HCT116 (cell line): ENCODE measurements at regions of chr20 and their contacts with region 1.

Region 1: DNA sequence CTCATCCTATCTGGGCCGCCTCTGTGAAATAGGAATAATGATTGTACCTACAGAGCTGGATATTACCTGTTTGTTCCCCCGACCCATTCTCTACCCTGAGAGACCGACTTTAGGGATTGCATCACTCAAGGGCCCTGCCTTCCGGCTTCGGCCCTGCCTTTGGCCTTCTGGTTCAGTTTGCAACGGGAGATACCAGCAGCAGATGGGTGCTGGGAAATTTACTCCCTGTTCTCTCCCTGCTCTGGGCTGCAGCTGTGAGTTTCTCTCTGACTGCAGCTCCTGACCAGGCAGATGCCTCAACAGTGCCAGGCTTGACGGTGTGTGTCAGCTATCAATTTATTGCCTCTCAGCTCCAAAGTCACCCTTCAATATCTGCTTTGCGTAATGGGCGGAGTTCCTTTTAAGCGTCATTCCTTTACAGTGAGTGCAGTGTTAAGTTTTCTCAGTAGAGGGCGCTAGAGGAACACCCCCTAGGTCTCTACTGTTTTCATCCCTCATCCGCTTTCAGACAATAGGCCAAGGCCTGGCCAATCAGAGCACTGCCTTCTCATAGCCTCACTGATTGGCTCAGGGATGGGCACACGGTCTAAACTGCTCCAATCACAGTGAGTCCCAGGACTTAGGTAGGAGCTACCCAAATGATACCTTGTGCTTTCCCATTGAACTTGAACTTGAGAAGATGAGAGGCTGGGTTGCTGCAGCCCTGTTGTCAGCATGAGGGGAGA is 30.0 kb downstream of the KCNG1 start:
- DNase-seq: peak; percentile 93
- ATAC-seq: peak; percentile 100
- H3K4me3 ChIP-seq: no peak overlapping the region
- H3K27ac ChIP-seq: no peak overlapping the region
- H3K4me1 ChIP-seq: peaks cover 0 to 8% of the 10 kb centered on the region in 2 experiments; a peak in 1 of 4 replicates
- H3K27me3 ChIP-seq: peaks cover 7% of the 10 kb centered on the region; the same call in 1 of the 2 replicates
- CTCF ChIP-seq: peak; percentile 85 to 91 (median 86)
- POLR2A ChIP-seq: no peak
- RAD21 ChIP-seq: peak; percentile 94

Region 2: DNA sequence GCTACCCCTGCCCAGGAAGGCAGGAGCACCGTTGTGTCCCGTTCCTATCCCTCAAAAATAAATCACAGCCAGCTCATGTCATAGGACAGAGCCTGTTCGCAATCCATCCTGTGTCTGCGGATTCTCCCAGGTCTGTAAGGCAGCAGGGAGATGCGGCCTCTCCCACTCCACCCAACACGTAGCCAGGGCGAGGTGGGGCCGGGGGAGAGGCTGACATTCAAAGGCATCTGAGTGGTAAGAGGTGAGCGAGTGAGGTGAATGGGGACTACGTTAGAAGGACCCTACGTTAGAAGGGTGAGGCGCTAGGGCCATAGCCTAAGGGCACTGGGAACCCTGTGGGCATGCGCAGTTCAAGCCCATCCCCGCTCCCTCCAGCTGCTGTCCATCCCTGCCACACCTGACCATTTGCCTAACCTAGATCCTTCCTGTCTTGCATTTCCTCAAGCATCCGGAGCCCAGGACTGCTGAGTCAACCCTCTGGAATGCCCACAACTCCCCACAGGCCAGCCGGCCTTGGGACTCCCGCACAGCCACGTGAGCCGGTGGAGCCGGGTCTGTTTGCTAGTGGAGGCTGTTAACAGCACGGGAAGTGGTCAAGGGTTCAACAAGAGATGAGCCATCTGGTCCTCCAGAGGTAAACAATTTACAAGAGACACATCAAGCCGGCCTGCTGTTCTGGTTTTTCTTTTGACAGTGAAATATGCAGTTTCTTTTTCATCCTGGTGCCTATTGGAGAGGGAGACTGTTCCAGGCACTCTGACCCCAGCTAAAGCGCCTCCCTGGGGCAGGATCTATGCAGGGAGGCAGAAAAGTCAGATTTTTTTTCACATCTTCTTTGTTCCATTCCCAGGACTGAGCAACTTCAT is 347.4 kb before region 1 on chr20:
- CTCF ChIA-PET with region 1: no interaction called
- POLR2A ChIA-PET with region 1: no interaction called
- RAD21 ChIA-PET with region 1: no interaction called
- intact Hi-C with region 1: no loop called
- DNase-seq: peak; percentile 80
- ATAC-seq: peak; percentile 94
- H3K4me3 ChIP-seq: peak overlapping the region in 1 of 2 experiments; percentile 35; a peak in 2 of 4 replicates
- H3K27ac ChIP-seq: peak overlapping the region; percentile 55
- H3K4me1 ChIP-seq: peaks cover 22 to 27% of the 10 kb centered on the region in 2 experiments
- H3K27me3 ChIP-seq: no peaks in the 10 kb centered on the region
- CTCF ChIP-seq: no peak
- POLR2A ChIP-seq: no peak
- RAD21 ChIP-seq: no peak

Region 3: GRCh38 chr20:50801666-50802125 is 191.2 kb before region 1 on chr20:
- CTCF ChIA-PET with region 1: no interaction called
- POLR2A ChIA-PET with region 1: no interaction called
- RAD21 ChIA-PET with region 1: no interaction called
- intact Hi-C with region 1: no loop called
- DNase-seq: no peak
- ATAC-seq: no peak
- H3K4me3 ChIP-seq: no peak overlapping the region
- H3K27ac ChIP-seq: no peak overlapping the region
- H3K4me1 ChIP-seq: no peaks in the 10 kb centered on the region
- H3K27me3 ChIP-seq: no peaks in the 10 kb centered on the region
- CTCF ChIP-seq: no peak
- POLR2A ChIP-seq: no peak
- RAD21 ChIP-seq: no peak

Region 4: GRCh38 chr20:50980851-50981713 is 11.8 kb before region 1 on chr20:
- CTCF ChIA-PET with region 1: interaction called, 38 read pairs
- POLR2A ChIA-PET with region 1: no interaction called
- RAD21 ChIA-PET with region 1: no interaction called
- intact Hi-C with region 1: no loop called
- DNase-seq: peak; percentile 41
- ATAC-seq: peak; percentile 76
- H3K4me3 ChIP-seq: no peak overlapping the region
- H3K27ac ChIP-seq: no peak overlapping the region
- H3K4me1 ChIP-seq: peaks cover 0 to 14% of the 10 kb centered on the region in 2 experiments; a peak in 2 of 4 replicates
- H3K27me3 ChIP-seq: no peaks in the 10 kb centered on the region
- CTCF ChIP-seq: peak; percentile 48 to 96 (median 85); a peak in 5 of 6 replicates
- POLR2A ChIP-seq: no peak
- RAD21 ChIP-seq: peak; percentile 75

Region 5: DNA sequence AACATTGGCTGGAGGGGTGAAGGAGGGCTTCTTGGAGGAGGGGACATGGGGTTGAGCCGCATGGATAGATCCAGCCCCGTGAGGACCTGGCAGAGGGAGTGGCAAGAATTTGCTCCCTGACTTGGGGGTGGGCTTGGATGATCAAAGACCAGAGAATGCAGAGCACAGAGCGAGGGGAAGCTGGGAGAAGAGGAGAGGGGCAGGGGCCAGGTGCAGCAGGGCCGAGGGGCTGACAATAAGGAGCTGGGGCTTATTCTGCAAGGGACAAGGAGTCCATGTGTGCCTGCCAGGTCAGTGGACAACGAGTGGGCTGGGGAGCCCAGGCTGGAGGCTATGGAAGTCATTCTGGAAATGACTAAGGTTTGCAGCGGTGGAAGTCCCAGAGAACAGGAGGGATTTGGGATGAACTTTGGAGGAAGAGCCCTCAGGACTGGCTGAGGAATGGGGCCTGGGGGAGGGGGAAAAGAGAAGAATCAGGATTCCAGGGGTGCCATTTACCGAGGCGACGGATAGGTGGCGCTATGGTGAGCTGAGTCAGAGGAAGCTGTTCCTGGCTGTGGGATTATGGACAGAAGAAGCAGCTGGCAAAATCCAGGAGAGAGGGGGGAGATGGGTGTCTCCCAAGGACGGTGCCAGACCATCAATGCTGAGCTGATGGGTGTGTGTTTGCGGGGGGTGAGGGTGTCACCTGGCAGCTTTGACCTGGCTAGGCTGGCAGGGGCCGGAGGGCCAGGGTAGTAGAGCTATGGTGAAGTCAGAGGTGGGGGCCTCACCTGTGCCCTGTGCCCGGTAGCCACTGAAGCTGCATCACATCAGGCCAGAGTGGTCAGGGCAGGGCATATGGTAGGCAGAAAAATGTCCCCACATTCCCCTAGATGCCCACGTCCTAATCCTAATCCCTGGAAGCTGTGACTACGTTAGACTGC is 22.2 kb after region 1 on chr20:
- CTCF ChIA-PET with region 1: interaction called, 27 read pairs
- POLR2A ChIA-PET with region 1: no interaction called
- RAD21 ChIA-PET with region 1: interaction called in 1 of 2 experiments, 5 read pairs
- intact Hi-C with region 1: no loop called
- DNase-seq: no peak
- ATAC-seq: peak; percentile 93
- H3K4me3 ChIP-seq: no peak overlapping the region
- H3K27ac ChIP-seq: no peak overlapping the region
- H3K4me1 ChIP-seq: no peaks in the 10 kb centered on the region
- H3K27me3 ChIP-seq: no peaks in the 10 kb centered on the region
- CTCF ChIP-seq: peak; percentile 43 to 92 (median 83); a peak in 5 of 6 replicates
- POLR2A ChIP-seq: no peak
- RAD21 ChIP-seq: peak; percentile 71

Region 6: DNA sequence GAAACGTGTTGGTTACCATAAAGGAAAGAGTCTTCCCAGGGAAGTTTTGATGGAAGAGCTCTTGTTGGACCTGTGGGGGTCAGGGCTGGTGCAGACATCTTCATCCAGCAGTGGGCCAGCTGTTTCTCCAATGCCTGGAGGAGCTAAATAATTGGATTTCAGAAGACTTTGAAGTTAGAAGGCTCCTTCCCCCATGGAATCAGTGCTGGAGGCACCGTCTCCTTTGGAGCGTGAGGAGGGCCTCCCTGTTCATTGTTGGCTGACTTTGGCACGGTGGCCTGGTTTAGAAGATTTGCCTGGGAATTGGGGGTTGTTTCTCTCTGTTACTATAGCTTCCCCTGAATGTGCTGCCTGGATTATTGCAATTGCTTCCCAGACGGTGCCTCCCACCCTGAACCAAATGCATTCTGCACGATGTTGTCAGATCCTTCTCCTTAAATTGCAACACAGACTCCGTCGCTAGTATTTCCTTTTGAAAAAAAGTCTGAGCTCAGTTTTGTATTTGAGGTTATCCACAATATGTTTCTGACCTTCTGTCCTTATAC is 57.7 kb after region 1 on chr20:
- CTCF ChIA-PET with region 1: no interaction called
- POLR2A ChIA-PET with region 1: no interaction called
- RAD21 ChIA-PET with region 1: no interaction called
- intact Hi-C with region 1: no loop called
- DNase-seq: no peak
- ATAC-seq: no peak
- H3K4me3 ChIP-seq: no peak overlapping the region
- H3K27ac ChIP-seq: no peak overlapping the region
- H3K4me1 ChIP-seq: no peaks in the 10 kb centered on the region
- H3K27me3 ChIP-seq: peaks cover 29% of the 10 kb centered on the region
- CTCF ChIP-seq: no peak
- POLR2A ChIP-seq: no peak
- RAD21 ChIP-seq: no peak

Region 7: GRCh38 chr20:51300104-51300503 is 307.2 kb after region 1 on chr20:
- CTCF ChIA-PET with region 1: interaction called, 91 read pairs
- POLR2A ChIA-PET with region 1: no interaction called
- RAD21 ChIA-PET with region 1: no interaction called
- intact Hi-C with region 1: no loop called
- DNase-seq: no peak
- ATAC-seq: no peak
- H3K4me3 ChIP-seq: no peak overlapping the region
- H3K27ac ChIP-seq: no peak overlapping the region
- H3K4me1 ChIP-seq: no peaks in the 10 kb centered on the region
- H3K27me3 ChIP-seq: no peaks in the 10 kb centered on the region
- CTCF ChIP-seq: no peak
- POLR2A ChIP-seq: no peak
- RAD21 ChIP-seq: no peak

Region 8: GRCh38 chr20:51306503-51307358 is 313.8 kb after region 1 on chr20:
- CTCF ChIA-PET with region 1: interaction called, 106 read pairs
- POLR2A ChIA-PET with region 1: interaction called, 15 read pairs
- RAD21 ChIA-PET with region 1: interaction called, 10 to 15 read pairs
- intact Hi-C with region 1: loop called (anchors 1 kb)
- DNase-seq: peak; percentile 62
- ATAC-seq: peak; percentile 100
- H3K4me3 ChIP-seq: no peak overlapping the region
- H3K27ac ChIP-seq: no peak overlapping the region; the same call in 1 of the 2 replicates
- H3K4me1 ChIP-seq: peaks cover 0 to 7% of the 10 kb centered on the region in 2 experiments; a peak in 1 of 4 replicates
- H3K27me3 ChIP-seq: no peaks in the 10 kb centered on the region
- CTCF ChIP-seq: peak; percentile 85 to 95 (median 88)
- POLR2A ChIP-seq: no peak
- RAD21 ChIP-seq: peak; percentile 99

Region 9: DNA sequence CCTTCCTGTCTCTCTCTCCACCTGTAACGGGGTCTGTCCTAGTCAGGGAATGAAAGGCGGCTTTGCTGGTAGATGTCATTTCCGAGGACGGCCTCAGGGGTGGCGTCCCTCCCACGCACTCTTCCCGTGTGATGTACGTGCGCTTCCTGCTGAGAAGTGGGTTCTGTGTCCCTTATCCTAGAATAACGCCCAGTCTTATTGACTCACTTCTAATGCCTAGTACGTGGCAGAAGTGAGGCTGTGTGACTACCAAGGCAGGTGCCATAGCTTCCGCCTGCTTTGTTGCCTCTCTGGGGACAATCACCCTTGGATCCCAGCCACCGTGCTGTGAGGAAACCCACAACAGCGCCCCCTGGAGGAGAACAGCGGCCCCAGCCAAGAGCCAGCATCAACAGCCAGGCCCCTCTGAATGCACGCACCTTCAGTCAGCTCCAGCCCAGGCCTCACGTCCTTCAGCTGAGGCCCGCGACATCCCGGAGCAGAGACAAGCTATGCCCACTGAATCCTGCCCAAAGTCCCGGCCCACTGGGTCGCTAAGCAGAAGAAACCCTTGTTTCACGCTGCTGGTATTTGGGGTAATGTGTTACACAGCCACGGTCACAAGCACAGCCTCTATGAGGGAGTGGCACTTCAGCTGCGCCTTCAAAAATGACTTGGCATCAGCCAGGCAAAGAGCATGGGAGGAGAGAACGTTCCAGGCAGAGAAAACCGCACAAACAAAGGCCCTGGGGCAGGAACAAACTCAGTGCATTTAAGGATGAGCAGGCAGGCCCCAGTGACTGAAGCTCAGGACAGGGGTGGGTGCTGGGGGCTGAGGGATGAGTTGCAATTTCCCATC is 325.4 kb after region 1 on chr20:
- CTCF ChIA-PET with region 1: interaction called, 56 read pairs
- POLR2A ChIA-PET with region 1: interaction called, 4 read pairs
- RAD21 ChIA-PET with region 1: interaction called, 3 to 4 read pairs
- intact Hi-C with region 1: no loop called
- DNase-seq: peak; percentile 51
- ATAC-seq: peak; percentile 96
- H3K4me3 ChIP-seq: no peak overlapping the region
- H3K27ac ChIP-seq: no peak overlapping the region
- H3K4me1 ChIP-seq: peaks cover 0 to 7% of the 10 kb centered on the region in 2 experiments; a peak in 3 of 4 replicates
- H3K27me3 ChIP-seq: no peaks in the 10 kb centered on the region
- CTCF ChIP-seq: peak; percentile 72 to 94 (median 94); a peak in 5 of 6 replicates
- POLR2A ChIP-seq: no peak
- RAD21 ChIP-seq: peak; percentile 59

Region 10: DNA sequence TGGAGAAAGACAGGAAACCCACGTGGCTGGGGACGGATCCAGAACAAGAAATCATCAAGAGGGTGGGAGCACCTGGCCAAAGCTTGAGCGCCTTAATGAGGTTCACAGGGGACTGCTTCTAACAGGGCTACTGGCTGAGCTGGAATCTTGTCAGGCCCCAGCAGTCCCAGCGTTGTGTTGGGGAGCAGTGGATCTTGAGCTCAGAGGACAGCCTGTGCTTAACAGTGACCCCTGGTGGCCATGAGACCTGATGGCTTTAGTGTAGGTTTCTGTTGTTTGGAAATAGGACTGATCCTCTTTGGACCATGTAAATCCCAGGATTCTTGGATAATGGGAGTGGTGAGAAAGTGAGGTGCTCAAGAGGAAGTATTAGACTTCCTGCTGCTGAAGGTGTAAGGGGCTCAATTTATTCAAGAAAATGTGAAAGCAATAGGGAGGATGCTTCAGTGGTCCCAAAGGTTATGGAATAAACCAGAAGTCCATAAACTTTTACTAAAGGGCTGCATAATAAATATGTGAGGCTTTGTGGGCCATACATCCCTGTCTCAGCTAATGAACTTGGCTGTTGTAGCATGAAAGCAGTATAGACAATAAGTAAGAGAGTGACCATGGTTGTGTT is 333.4 kb after region 1 on chr20:
- CTCF ChIA-PET with region 1: interaction called, 56 read pairs
- POLR2A ChIA-PET with region 1: interaction called, 4 read pairs
- RAD21 ChIA-PET with region 1: interaction called, 4 to 10 read pairs
- intact Hi-C with region 1: no loop called
- DNase-seq: peak; percentile 54
- ATAC-seq: peak; percentile 93
- H3K4me3 ChIP-seq: no peak overlapping the region
- H3K27ac ChIP-seq: no peak overlapping the region
- H3K4me1 ChIP-seq: no peaks in the 10 kb centered on the region
- H3K27me3 ChIP-seq: no peaks in the 10 kb centered on the region
- CTCF ChIP-seq: peak; percentile 51 to 86 (median 73); a peak in 5 of 6 replicates
- POLR2A ChIP-seq: no peak
- RAD21 ChIP-seq: peak; percentile 56

Region 11: DNA sequence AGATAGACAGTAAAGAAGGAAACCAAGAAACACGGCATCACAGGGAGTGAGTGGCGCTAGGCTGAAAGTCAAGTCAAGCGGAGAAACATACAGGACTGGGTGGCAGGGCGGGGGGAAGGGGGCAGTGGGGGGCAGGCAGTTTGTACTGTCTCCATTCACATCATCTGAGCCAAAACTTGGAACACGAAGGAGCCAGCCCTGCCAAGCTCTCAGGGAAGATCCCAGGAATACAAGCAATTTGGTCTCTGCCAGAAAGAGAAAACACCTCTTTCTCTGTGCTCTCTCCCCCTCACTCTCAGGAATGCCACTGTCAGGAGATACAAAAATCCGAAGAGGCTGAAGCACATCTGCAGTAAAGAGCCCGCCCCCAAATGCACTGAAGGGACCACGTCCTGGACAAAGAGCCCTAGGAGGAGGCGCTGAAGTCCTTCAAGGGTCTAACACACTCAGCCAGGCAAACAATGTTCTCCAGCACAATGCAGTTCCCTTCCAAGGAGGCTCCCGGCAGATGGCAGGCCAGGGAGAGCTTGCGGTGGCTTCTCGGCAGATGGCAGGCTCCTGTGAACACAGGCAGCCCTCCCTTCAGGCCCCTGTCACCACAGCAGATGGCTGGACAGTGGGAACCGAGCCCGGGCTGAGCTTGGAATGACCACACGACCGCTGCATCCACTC is 685.3 kb after region 1 on chr20:
- CTCF ChIA-PET with region 1: no interaction called
- POLR2A ChIA-PET with region 1: no interaction called
- RAD21 ChIA-PET with region 1: no interaction called
- intact Hi-C with region 1: no loop called
- DNase-seq: no peak
- ATAC-seq: no peak
- H3K4me3 ChIP-seq: no peak overlapping the region
- H3K27ac ChIP-seq: no peak overlapping the region
- H3K4me1 ChIP-seq: no peaks in the 10 kb centered on the region
- H3K27me3 ChIP-seq: no peaks in the 10 kb centered on the region
- CTCF ChIP-seq: no peak
- POLR2A ChIP-seq: no peak
- RAD21 ChIP-seq: no peak